K562 (cell line): ENCODE measurements at regions of chr2 and their contacts with region 1.

Region 1: GRCh38 chr2:235493775-235494715 is at the start of gene AGAP1:
- DNase-seq: peak; percentile 80 to 85 (median 83)
- ATAC-seq: peak; percentile 81
- H3K4me3 ChIP-seq: peak within 1 kb of the TSS; percentile 62
- H3K27ac ChIP-seq: peak within 1 kb of the TSS; percentile 66; the same call in 2 of the 3 replicates
- H3K4me1 ChIP-seq: peaks cover 28 to 38% of the 10 kb centered on the region in 2 experiments; a peak in 4 of 5 replicates
- H3K27me3 ChIP-seq: no peaks in the 10 kb centered on the region
- CTCF ChIP-seq: no peak
- EP300 ChIP-seq: no peak
- POLR2A ChIP-seq: no peak
- RAD21 ChIP-seq: no peak
- polyA plus RNA-seq, gene AGAP1: 1.3 to 2.3 TPM

Region 2: DNA sequence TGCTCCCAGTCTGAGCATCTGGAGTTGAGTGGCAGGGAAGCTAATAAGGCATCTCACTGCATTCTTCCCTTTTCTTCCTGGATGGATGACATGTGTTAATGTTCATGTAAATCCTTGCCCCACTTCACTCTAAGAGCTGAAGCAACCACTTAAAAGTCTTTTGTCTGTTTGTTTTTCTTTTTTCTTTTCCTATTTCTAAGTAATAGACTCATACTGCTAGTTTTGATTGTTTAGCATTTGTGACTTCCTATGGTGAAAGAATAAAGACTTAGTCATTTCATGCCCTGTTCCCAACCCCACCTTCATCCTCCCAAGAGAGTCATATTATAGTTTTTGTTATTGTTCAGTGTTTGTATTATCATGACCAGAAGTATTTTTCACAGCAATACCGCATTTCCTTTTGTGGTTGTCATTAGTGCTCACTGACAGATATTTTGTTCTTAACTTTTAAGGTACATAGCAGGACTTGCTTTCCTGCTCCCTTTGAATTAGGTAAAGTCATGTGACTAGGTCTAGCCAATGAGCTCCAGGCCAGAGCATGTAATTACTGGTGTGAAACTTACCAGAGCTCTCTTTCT is 1461.7 kb before region 1 on chr2:
- CTCF ChIA-PET with region 1: no interaction called
- POLR2A ChIA-PET with region 1: no interaction called
- in situ Hi-C with region 1: no loop called
- intact Hi-C with region 1: no loop called
- DNase-seq: no peak
- ATAC-seq: no peak
- H3K4me3 ChIP-seq: no peak overlapping the region
- H3K27ac ChIP-seq: no peak overlapping the region
- H3K4me1 ChIP-seq: no peaks in the 10 kb centered on the region
- H3K27me3 ChIP-seq: no peaks in the 10 kb centered on the region
- CTCF ChIP-seq: no peak
- EP300 ChIP-seq: no peak
- POLR2A ChIP-seq: no peak
- RAD21 ChIP-seq: no peak

Region 3: GRCh38 chr2:235135990-235136561 is 358.0 kb before region 1 on chr2:
- CTCF ChIA-PET with region 1: no interaction called
- POLR2A ChIA-PET with region 1: no interaction called
- in situ Hi-C with region 1: no loop called
- intact Hi-C with region 1: loop called (anchors 10 kb)
- DNase-seq: peak; percentile 57 to 65 (median 60)
- ATAC-seq: peak; percentile 89
- H3K4me3 ChIP-seq: no peak overlapping the region
- H3K27ac ChIP-seq: no peak overlapping the region
- H3K4me1 ChIP-seq: no peaks in the 10 kb centered on the region
- H3K27me3 ChIP-seq: peaks cover 0 to 14% of the 10 kb centered on the region in 2 experiments; a peak in 2 of 5 replicates
- CTCF ChIP-seq: peak; percentile 62 to 67 (median 63)
- EP300 ChIP-seq: no peak
- POLR2A ChIP-seq: no peak
- RAD21 ChIP-seq: peak; percentile 32 to 59; a peak in 2 of 4 replicates

Region 4: DNA sequence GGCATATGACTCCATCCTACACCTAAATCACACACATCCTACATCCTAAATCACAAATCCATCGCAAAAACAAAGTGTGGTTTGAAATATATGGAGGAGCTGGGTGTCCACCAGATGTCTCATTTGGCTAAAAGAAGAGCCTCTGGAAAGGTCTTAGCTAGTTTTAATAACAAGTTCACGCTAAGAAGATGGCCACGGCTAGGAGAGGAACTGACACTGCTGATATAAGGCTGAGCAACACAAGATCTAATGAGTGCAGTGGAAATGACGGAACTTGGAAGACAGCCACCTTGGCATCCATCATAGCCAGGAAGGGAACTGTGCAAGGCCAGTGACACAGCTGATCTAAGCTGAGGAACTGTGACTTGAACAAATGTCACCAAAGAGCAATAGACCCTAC is 60.2 kb before region 1 on chr2:
- CTCF ChIA-PET with region 1: no interaction called
- POLR2A ChIA-PET with region 1: no interaction called
- in situ Hi-C with region 1: no loop called
- intact Hi-C with region 1: loop called (anchors 2 kb)
- DNase-seq: peak in 2 of 4 experiments; percentile 41 to 52
- ATAC-seq: peak; percentile 96
- H3K4me3 ChIP-seq: no peak overlapping the region
- H3K27ac ChIP-seq: peak overlapping the region; percentile 32; the same call in 1 of the 3 replicates
- H3K4me1 ChIP-seq: peaks cover 0 to 8% of the 10 kb centered on the region in 2 experiments; a peak in 3 of 5 replicates
- H3K27me3 ChIP-seq: no peaks in the 10 kb centered on the region
- CTCF ChIP-seq: peak; percentile 39 to 75 (median 48); a peak in 5 of 6 replicates
- EP300 ChIP-seq: peak; percentile 44; the same call in 1 of the 2 replicates
- POLR2A ChIP-seq: no peak
- RAD21 ChIP-seq: peak; percentile 82 to 88

Region 5: GRCh38 chr2:235460548-235461047 is 33.4 kb before region 1 on chr2:
- CTCF ChIA-PET with region 1: no interaction called
- POLR2A ChIA-PET with region 1: interaction called, 7 read pairs
- in situ Hi-C with region 1: no loop called
- intact Hi-C with region 1: loop called (anchors 2 kb)
- DNase-seq: peak; percentile 75 to 94 (median 86)
- ATAC-seq: peak; percentile 90
- H3K4me3 ChIP-seq: no peak overlapping the region
- H3K27ac ChIP-seq: peak overlapping the region; percentile 98
- H3K4me1 ChIP-seq: peaks cover 41 to 49% of the 10 kb centered on the region in 2 experiments
- H3K27me3 ChIP-seq: no peaks in the 10 kb centered on the region
- CTCF ChIP-seq: peak in 1 of 3 experiments; percentile 5; a peak in 1 of 6 replicates
- EP300 ChIP-seq: peak; percentile 99
- POLR2A ChIP-seq: 0 out of 2 replicates have a peak, but pooled peaks have one; percentile 42
- RAD21 ChIP-seq: peak in 1 of 2 experiments; percentile 43; a peak in 2 of 4 replicates